ENCODE measurements at regions of chr12 and their contacts with region 1.

Region 1: GRCh38 chr12:58359084-58359483 is 417.7 kb downstream of the ATP23 start:
- DNase-seq: no peak
- ATAC-seq: no peak
- H3K4me3 ChIP-seq: no peak overlapping the region
- H3K27ac ChIP-seq: no peak overlapping the region
- H3K4me1 ChIP-seq: no peaks in the 10 kb centered on the region
- H3K27me3 ChIP-seq: no peaks in the 10 kb centered on the region
- CTCF ChIP-seq: no peak
- POLR2A ChIP-seq: no peak

Region 2: GRCh38 chr12:57771708-57772428 is 587.2 kb before region 1 on chr12 and contains the start of gene METTL1:
- intact Hi-C with region 1: no loop called
- DNase-seq: peak; percentile 93 to 95 (median 95)
- ATAC-seq: peak; percentile 92 to 96 (median 94)
- H3K4me3 ChIP-seq: peak within 1 kb of the TSS; percentile 72 to 88 (median 79)
- H3K27ac ChIP-seq: peak within 1 kb of the TSS; percentile 75 to 96 (median 75)
- H3K4me1 ChIP-seq: peaks cover 2 to 11% (median 7%) of the 10 kb centered on the region in 4 donors
- H3K27me3 ChIP-seq: no peaks in the 10 kb centered on the region
- CTCF ChIP-seq: no peak
- POLR2A ChIP-seq: peak; percentile 78
- total RNA-seq, gene METTL1: 9.7 to 13.6 (median 10.3) TPM

Region 3: DNA sequence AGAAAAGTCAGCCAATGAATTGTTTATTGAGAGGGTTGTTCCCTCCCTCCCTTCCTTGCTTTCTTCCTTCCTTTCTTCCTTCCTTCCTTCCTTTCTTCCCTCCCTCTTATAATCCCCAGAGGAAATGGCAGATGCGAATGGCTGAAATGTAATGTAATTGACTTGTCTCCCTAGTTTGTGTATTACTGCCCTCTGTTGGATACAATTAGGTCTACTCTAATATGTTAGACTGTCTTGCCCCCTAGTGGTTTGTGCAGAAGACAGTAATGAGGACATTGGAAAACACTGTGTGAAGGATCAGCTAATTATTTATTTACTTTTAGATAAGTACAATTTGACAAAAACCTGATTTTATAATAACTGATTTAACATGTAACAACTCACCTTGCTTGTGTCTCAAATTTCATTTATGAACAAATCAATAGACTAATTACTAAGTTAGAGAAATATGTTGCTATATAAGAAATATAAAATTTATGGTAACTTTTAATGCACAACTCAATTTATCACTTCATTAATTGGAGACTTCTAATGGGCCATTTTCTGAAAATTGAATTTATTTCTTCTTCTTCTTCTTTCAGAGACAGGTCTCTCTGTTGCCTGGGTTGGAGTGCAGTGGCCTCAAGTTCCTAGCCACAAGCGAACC is 791.0 kb after region 1 on chr12:
- intact Hi-C with region 1: loop called in 1 of 2 experiments (anchors 10 kb)
- DNase-seq: no peak
- ATAC-seq: peak; percentile 99 to 100 (median 99)
- H3K4me3 ChIP-seq: no peak overlapping the region
- H3K27ac ChIP-seq: no peak overlapping the region
- H3K4me1 ChIP-seq: no peaks in the 10 kb centered on the region
- H3K27me3 ChIP-seq: no peaks in the 10 kb centered on the region
- CTCF ChIP-seq: peak; percentile 92 to 99 (median 94)
- POLR2A ChIP-seq: no peak

Measured in right lobe of liver (tissue), 6 donors.